ENCODE measurements at regions of chr5 and their contacts with region 1.

Region 1: DNA sequence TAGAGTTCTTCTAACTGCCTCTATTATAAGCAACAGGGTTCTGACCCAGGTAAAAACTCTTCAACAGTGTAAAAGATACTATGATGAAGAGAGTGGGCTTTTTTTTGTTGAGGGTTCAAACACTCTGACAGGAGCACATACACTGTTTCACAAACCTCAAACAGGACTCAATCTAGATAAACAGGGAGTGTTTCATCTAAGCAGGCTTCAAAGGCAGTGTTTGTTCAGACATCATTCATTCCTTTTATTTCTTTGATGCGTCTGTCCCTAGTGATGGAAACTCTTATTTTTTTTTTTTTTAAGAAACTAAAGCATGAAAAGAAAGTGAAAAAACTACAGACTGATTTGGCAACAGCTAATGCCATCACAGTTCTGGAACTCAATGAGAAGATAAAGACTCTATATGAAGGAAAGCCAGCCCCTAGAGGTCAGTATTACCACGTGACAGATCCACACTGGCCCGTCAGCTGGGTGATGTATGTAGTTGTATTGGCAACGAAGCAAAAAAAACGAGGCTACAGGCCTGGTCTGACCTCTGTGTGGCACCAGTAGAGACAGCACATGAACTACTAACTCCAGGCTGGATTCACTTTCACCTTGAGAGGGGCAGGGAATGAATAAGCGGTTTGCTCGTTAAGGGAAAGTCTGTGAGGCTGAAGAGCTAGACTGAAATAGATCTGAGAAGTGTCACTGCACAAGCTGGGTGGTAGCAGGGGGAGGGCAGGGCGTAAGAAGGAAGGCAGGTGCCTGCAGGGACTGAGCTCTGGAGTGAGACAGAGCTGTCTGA is 172.2 kb downstream of the CCDC192 start:
- DNase-seq: peak; percentile 51
- H3K4me3 ChIP-seq: no peak overlapping the region
- H3K27ac ChIP-seq: no peak overlapping the region
- H3K4me1 ChIP-seq: peaks cover 0 to 8% of the 10 kb centered on the region in 2 experiments; a peak in 2 of 4 replicates
- H3K27me3 ChIP-seq: no peaks in the 10 kb centered on the region
- CTCF ChIP-seq: peak; percentile 57
- EP300 ChIP-seq: no peak
- RAD21 ChIP-seq: peak; percentile 84

Region 2: GRCh38 chr5:127739807-127740384 is 135.5 kb before region 1 on chr5:
- CTCF ChIA-PET with region 1: no interaction called
- POLR2A ChIA-PET with region 1: no interaction called
- DNase-seq: no peak
- H3K4me3 ChIP-seq: peak overlapping the region; percentile 20 to 35; a peak in 3 of 4 replicates
- H3K27ac ChIP-seq: no peak overlapping the region
- H3K4me1 ChIP-seq: no peaks in the 10 kb centered on the region; a peak in 1 of 4 replicates
- H3K27me3 ChIP-seq: peaks cover 5% of the 10 kb centered on the region; the same call in 1 of the 2 replicates
- CTCF ChIP-seq: no peak
- EP300 ChIP-seq: no peak
- RAD21 ChIP-seq: no peak

Region 3: DNA sequence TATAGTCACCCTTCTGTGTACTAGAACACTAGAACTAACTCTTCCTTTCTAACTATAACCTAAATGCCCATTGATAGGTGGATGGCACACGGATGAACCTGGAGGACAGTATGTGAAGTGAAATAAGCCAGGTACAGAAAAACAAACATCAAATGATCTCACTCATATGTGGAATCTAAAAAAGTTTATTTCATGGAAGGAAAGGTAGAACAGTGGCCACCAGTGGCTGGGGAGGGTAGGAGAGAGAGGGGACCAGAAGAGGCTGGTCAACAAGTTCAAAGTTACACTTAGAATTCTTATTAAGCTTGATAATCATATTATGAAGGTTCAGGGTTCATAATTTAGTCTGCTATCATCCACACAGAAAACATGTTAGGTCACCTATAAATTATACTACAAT is 100.5 kb after region 1 on chr5:
- CTCF ChIA-PET with region 1: no interaction called
- POLR2A ChIA-PET with region 1: no interaction called
- DNase-seq: no peak
- H3K4me3 ChIP-seq: no peak overlapping the region
- H3K27ac ChIP-seq: no peak overlapping the region
- H3K4me1 ChIP-seq: no peaks in the 10 kb centered on the region
- H3K27me3 ChIP-seq: no peaks in the 10 kb centered on the region
- CTCF ChIP-seq: 0 out of 2 replicates have a peak, but pooled peaks have one; percentile 7
- EP300 ChIP-seq: no peak
- RAD21 ChIP-seq: no peak

Region 4: DNA sequence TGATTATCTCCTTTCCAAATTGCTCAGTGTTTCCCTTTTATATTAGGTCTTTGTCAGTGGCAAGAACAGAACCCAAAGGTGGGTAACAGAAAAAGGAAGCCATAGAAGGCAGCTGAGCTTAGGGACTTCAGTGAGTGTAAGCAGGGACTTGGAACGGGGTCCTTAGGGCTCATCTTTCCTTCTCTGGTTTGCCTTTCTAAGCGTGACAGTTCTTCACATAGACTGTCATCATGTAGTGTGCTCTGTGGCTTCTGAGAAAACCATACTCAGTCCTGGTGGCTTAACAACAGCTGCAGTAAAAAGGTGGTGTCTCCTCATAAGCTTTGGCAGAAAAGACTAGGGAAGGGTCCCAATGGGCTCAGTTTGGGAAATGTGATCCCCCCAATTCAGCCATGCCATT is 316.9 kb after region 1 on chr5:
- CTCF ChIA-PET with region 1: interaction called, 14 read pairs
- POLR2A ChIA-PET with region 1: no interaction called
- DNase-seq: no peak
- H3K4me3 ChIP-seq: no peak overlapping the region
- H3K27ac ChIP-seq: no peak overlapping the region
- H3K4me1 ChIP-seq: no peaks in the 10 kb centered on the region; a peak in 1 of 4 replicates
- H3K27me3 ChIP-seq: no peaks in the 10 kb centered on the region
- CTCF ChIP-seq: no peak
- EP300 ChIP-seq: no peak
- RAD21 ChIP-seq: no peak

Region 5: DNA sequence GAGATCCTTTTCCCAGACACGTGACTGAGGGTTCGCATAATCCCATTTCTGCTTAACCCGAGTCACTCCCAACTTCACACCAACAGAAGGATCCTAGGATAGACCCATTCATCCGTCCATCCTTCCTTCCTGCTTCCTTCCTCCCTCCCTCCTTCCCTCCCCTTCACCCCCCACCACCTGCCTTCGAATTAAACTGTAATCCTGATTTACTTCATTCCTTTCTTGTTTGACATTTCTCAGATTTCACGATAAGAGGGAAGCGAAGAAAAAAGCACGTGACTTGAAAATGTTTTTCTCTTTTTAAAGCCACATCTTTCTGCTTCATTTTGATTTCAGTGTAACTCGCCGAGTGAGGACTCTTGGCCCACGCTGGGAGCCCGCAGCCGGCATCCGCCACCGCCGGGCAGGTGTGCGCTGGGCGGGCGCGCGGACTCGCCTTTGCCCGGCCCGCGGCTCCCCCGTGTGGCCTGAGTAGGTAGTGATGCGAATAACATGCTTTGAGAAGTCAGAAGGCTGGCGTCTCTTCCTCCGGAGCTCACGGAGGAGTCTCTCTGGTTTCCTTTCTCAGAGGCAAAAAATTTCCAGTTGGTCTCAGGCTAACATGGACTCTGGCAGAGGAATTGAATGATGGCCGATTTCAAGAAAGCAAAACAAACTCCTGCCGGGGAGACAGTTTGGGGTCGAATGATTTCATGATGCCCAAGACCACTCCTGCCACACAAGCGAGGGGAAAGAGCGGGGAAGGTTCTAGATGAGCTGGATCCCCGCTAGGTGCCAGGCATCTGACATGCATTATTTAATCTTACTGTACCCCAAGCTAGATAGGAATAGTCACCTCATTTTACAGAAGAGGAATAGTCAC is 325.9 kb after region 1 on chr5:
- CTCF ChIA-PET with region 1: interaction called, 67 read pairs
- POLR2A ChIA-PET with region 1: interaction called, 3 read pairs
- DNase-seq: peak; percentile 82
- H3K4me3 ChIP-seq: peak overlapping the region; percentile 6 to 47; a peak in 3 of 4 replicates
- H3K27ac ChIP-seq: no peak overlapping the region
- H3K4me1 ChIP-seq: peaks cover 0 to 3% of the 10 kb centered on the region in 2 experiments; a peak in 1 of 4 replicates
- H3K27me3 ChIP-seq: no peaks in the 10 kb centered on the region
- CTCF ChIP-seq: peak; percentile 91
- EP300 ChIP-seq: no peak
- RAD21 ChIP-seq: peak; percentile 88

Region 6: DNA sequence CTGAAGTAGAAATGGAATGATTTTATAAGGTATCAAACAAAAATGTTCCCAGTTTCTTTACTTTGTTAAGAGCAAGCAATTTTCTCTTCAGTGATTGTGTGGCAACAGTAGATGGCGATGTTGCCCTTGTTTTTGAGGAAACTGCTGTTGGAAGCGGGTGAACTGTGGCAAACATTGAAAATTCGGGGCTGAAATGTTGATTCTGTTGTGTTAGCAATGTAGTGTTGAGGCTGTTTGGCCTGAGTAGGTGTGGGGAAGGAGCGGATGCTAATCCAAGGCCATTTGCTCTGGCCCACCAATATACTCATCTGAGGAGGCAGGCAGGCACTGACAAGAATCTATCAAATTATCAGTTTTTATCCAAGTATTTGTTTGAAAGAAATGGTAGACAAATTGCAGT is 337.9 kb after region 1 on chr5:
- CTCF ChIA-PET with region 1: interaction called, 16 read pairs
- POLR2A ChIA-PET with region 1: no interaction called
- DNase-seq: peak; percentile 31
- H3K4me3 ChIP-seq: peak overlapping the region in 1 of 2 experiments; percentile 14; a peak in 1 of 4 replicates
- H3K27ac ChIP-seq: no peak overlapping the region
- H3K4me1 ChIP-seq: no peaks in the 10 kb centered on the region
- H3K27me3 ChIP-seq: no peaks in the 10 kb centered on the region; the same call in 1 of the 2 replicates
- CTCF ChIP-seq: peak; percentile 86
- EP300 ChIP-seq: no peak
- RAD21 ChIP-seq: peak; percentile 94

Measured in SK-N-SH (cell line).